GM12878 (cell line): ENCODE measurements at regions of chr12 and their contacts with region 1.

Region 1: DNA sequence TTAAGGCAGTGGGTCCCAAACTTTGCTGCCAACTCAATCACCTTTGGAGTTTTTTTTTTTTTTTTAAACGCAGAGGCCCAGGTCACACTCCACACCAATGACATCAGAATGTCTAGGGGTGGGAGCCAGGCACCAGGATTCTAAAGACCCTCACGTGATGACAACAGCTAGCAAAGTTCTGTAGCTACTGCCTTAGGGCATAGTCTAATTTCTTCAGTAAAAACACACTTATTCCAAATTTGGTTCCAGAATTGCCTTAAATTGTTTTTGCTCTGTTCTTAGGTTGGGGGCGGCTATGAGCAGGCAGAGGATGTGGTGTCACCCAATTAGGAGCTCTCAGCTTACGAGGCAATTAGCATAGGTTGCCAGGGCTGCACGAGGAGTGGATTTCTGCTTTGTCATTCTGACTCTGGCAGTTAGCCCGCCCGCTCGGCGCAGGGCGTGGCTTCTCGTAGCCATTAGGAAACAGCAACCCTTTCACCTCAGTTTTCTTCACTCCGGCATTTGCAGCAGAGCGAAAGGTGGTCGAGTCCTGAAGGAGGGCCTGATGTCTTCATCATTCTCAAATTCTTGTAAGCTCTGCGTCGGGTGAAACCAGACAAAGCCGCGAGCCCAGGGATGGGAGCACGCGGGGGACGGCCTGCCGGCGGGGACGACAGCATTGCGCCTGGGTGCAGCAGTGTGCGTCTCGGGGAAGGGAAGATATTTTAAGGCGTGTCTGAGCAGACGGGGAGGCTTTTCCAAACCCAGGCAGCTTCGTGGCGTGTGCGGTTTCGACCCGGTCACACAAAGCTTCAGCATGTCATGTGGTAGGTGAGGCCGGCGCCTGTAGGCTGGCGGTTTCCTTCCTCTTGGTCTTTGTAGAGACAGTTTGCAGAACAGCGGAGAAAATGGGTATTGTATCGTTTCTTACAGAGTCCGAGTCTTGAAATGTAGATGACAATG is 16.7 kb upstream of the EID3 start:
- DNase-seq: peak; percentile 94
- ATAC-seq: peak; percentile 93
- H3K4me3 ChIP-seq: peak overlapping the region; percentile 89
- H3K27ac ChIP-seq: peak overlapping the region; percentile 89
- H3K4me1 ChIP-seq: peaks cover 8% of the 10 kb centered on the region
- H3K27me3 ChIP-seq: no peaks in the 10 kb centered on the region
- CTCF ChIP-seq: no peak
- EP300 ChIP-seq: 0 out of 4 replicates have a peak, but pooled peaks of 1 of the 2 experiments have one; percentile 22
- POLR2A ChIP-seq: peak; percentile 91
- RAD21 ChIP-seq: no peak

Region 2: DNA sequence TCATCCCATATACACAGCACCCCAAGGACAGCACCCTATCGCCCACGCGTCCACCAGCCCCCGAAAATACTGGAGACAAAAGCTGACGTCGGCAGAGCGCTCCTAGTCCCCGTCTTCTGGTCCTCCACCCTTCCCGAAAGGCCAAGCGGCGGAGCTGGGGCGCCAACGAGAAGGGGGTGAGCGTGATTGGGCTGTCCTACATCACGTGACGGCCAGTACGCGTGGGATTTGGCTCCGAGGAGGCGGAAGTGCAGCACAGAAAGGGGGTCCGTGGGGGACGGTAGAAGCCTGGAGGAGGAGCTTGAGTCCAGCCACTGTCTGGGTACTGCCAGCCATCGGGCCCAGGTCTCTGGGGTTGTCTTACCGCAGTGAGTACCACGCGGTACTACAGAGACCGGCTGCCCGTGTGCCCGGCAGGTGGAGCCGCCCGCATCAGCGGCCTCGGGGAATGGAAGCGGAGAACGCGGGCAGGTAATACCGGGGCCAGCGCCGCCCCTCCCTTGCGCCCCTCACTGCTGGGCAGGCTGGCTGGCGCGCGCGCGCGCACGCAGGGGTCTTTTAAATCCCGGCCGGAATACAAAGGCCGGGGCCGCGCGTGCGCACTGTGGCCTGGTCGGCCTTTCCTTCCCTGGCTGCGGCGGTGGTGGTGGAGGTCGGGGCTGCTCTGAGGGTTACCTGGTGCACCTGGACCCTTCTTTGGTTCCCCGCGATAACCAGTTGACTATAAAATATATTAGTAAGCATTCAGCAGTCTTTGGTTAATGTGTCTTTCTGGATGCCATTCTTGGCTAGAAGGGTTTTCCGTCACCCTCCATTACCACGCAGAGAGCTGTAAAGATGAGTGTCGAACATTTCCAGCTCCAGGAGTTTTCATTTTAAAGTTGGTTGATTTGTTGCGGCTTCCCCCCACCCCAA is 321.0 kb before region 1 on chr12 and contains the start of gene TDG:
- CTCF ChIA-PET with region 1: no interaction called
- POLR2A ChIA-PET with region 1: interaction called, 6 read pairs
- RAD21 ChIA-PET with region 1: no interaction called
- SMC1A ChIA-PET with region 1: no interaction called
- in situ Hi-C with region 1: no loop called
- intact Hi-C with region 1: loop called (anchors 10 kb)
- DNase-seq: peak; percentile 97
- ATAC-seq: peak; percentile 96
- H3K4me3 ChIP-seq: peak within 1 kb of the TSS; percentile 92
- H3K27ac ChIP-seq: peak within 1 kb of the TSS; percentile 94
- H3K4me1 ChIP-seq: peaks cover 10% of the 10 kb centered on the region
- H3K27me3 ChIP-seq: no peaks in the 10 kb centered on the region
- CTCF ChIP-seq: peak in 1 of 3 experiments; percentile 23; a peak in 1 of 6 replicates
- EP300 ChIP-seq: no peak
- POLR2A ChIP-seq: peak; percentile 96
- RAD21 ChIP-seq: no peak
- polyA plus RNA-seq, gene TDG: 29.7 to 33.7 TPM

Region 3: DNA sequence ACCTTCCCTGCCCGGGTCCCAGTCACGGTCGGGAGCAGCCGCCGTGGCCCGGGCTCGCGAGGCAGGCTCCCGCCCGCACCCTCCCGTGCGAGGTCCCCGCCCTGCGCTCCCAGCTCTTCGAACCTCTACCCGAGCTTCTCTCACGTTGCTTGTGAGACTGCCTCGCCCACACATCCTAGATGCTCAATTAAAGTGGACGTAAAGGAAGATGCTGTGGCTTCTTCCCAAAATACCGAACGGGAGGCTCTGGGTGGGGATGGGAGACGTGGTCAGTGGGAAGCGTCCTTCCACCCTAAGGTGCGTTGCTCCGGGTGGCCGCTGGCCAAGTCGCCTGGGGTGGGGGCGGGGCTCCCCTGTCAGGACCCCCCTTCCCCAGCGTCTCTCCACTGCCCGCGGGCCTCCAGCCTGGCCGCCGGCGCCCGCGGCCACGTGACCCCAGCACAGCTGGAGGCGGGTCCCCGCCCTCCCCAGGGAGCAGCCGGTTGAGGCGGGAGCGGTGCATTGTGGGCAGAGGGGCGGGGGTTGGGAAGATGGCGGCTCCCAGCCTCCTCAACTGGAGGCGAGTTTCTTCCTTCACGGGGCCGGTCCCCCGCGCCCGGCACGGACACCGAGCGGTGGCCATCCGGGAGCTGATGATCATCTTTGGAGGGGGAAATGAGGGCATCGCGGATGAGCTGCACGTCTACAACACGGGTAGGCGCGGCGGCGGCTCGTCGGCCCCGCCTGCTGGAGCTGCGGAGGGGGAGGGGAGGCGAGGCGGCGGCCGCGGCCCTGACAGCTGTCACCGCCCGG is 222.6 kb before region 1 on chr12 and contains the start of gene HCFC2:
- CTCF ChIA-PET with region 1: no interaction called
- POLR2A ChIA-PET with region 1: interaction called, 3 read pairs
- RAD21 ChIA-PET with region 1: interaction called, 8 read pairs
- SMC1A ChIA-PET with region 1: no interaction called
- in situ Hi-C with region 1: no loop called
- intact Hi-C with region 1: loop called (anchors 10 kb)
- DNase-seq: peak; percentile 61
- ATAC-seq: peak; percentile 94
- H3K4me3 ChIP-seq: peak within 1 kb of the TSS; percentile 88
- H3K27ac ChIP-seq: peak within 1 kb of the TSS; percentile 81
- H3K4me1 ChIP-seq: no peaks in the 10 kb centered on the region
- H3K27me3 ChIP-seq: no peaks in the 10 kb centered on the region; a peak in 1 of 4 replicates
- CTCF ChIP-seq: no peak
- EP300 ChIP-seq: peak in 1 of 2 experiments; percentile 17; a peak in 1 of 4 replicates
- POLR2A ChIP-seq: peak; percentile 81
- RAD21 ChIP-seq: no peak
- polyA plus RNA-seq, gene HCFC2: 1.8 to 3.8 TPM

Region 4: GRCh38 chr12:104132351-104132956 is 154.4 kb before region 1 on chr12:
- CTCF ChIA-PET with region 1: no interaction called
- POLR2A ChIA-PET with region 1: interaction called, 5 read pairs
- RAD21 ChIA-PET with region 1: no interaction called
- SMC1A ChIA-PET with region 1: interaction called, 4 read pairs
- in situ Hi-C with region 1: no loop called
- intact Hi-C with region 1: loop called (anchors 5 kb)
- DNase-seq: no peak
- ATAC-seq: no peak; the same call in 2 of the 3 replicates
- H3K4me3 ChIP-seq: no peak overlapping the region
- H3K27ac ChIP-seq: no peak overlapping the region
- H3K4me1 ChIP-seq: peaks cover 6% of the 10 kb centered on the region; the same call in 1 of the 2 replicates
- H3K27me3 ChIP-seq: no peaks in the 10 kb centered on the region
- CTCF ChIP-seq: no peak
- EP300 ChIP-seq: no peak
- POLR2A ChIP-seq: no peak
- RAD21 ChIP-seq: no peak

Region 5: DNA sequence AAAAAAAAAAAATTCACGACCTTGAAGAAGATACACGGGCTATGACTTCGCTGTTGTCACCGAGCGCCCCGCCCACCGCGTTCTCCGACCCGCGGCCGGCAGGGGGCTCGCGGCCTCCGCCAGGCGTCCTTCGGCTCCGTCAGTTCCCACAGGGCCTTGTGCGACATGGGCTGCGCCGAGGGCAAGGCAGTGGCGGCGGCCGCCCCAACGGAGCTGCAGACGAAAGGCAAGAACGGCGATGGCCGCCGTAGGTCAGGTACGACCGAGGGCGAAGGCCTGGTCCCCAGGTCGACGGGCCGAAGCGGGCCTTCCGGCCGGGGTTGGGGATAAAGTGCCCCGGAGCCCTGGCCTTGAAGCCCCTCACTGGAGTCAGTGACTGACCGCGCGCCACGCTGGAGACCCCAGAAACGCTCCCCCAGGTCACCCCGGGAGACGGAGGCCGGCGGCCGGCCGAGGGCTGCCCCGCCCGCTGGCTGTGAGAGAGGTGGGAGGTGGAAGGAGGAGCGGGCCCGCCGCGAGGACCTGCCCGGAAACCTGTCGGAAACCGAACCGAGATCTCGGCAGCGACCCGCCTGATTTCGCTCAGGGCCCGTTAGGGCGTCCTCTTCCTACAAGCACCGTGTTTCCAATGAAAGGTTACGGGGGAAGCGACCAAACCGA is 71.0 kb before region 1 on chr12 and contains the start of gene TXNRD1:
- CTCF ChIA-PET with region 1: interaction called, 11 read pairs
- POLR2A ChIA-PET with region 1: no interaction called
- RAD21 ChIA-PET with region 1: interaction called, 9 read pairs
- SMC1A ChIA-PET with region 1: no interaction called
- in situ Hi-C with region 1: no loop called
- intact Hi-C with region 1: no loop called
- DNase-seq: peak; percentile 19
- ATAC-seq: peak; percentile 99
- H3K4me3 ChIP-seq: peak within 1 kb of the TSS; percentile 53; the same call in 1 of the 2 replicates
- H3K27ac ChIP-seq: no peak within 1 kb of the TSS
- H3K4me1 ChIP-seq: no peaks in the 10 kb centered on the region
- H3K27me3 ChIP-seq: no peaks in the 10 kb centered on the region
- CTCF ChIP-seq: peak; percentile 81 to 94 (median 83)
- EP300 ChIP-seq: no peak
- POLR2A ChIP-seq: peak; percentile 81
- RAD21 ChIP-seq: peak; percentile 85
- polyA plus RNA-seq, gene TXNRD1: 52.6 to 56.7 TPM

Region 6: GRCh38 chr12:104276273-104277131 is 10.3 kb before region 1 on chr12:
- CTCF ChIA-PET with region 1: interaction called, 24 read pairs
- POLR2A ChIA-PET with region 1: interaction called, 56 read pairs
- RAD21 ChIA-PET with region 1: interaction called, 41 read pairs
- SMC1A ChIA-PET with region 1: interaction called, 58 read pairs
- in situ Hi-C with region 1: no loop called
- intact Hi-C with region 1: no loop called
- DNase-seq: no peak
- ATAC-seq: peak; percentile 94
- H3K4me3 ChIP-seq: peak overlapping the region; percentile 40
- H3K27ac ChIP-seq: peak overlapping the region; percentile 53
- H3K4me1 ChIP-seq: peaks cover 11% of the 10 kb centered on the region
- H3K27me3 ChIP-seq: no peaks in the 10 kb centered on the region
- CTCF ChIP-seq: no peak
- EP300 ChIP-seq: no peak
- POLR2A ChIP-seq: no peak
- RAD21 ChIP-seq: no peak

Region 7: DNA sequence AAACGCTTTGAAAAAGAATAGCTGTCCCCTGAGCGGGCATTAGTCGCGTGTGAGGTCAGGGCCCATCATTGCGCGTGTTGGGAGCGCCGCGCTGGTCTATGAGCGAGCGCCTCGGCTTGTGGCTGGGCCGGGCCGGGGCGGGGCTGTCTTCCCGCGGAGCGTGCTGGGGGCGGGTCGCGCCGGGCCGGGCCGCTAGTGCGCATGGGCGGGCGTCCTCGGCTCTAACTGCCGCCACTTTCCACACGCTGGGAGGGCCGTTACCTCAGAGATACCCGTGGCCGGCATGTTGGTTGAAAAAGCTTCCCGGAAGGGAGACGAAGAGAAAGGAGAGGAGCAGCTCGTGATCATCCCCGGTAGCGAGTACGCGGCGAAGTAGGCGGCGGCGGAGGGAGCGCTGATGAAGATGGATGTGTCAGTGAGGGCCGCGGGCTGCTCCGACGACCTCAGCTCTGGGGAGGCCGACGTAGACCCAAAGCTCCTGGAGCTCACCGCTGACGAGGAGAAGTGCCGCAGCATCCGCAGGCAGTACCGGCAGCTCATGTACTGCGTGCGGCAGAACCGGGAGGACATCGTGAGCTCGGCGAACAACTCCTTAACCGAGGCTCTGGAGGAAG is 16.8 kb after region 1 on chr12 and contains the start of gene EID3:
- CTCF ChIA-PET with region 1: interaction called, 22 read pairs
- POLR2A ChIA-PET with region 1: interaction called, 42 read pairs
- RAD21 ChIA-PET with region 1: interaction called, 33 read pairs
- SMC1A ChIA-PET with region 1: interaction called, 33 read pairs
- in situ Hi-C with region 1: no loop called
- intact Hi-C with region 1: no loop called
- DNase-seq: no peak
- ATAC-seq: peak; percentile 99
- H3K4me3 ChIP-seq: peak within 1 kb of the TSS; percentile 69
- H3K27ac ChIP-seq: peak within 1 kb of the TSS; percentile 66
- H3K4me1 ChIP-seq: peaks cover 9% of the 10 kb centered on the region
- H3K27me3 ChIP-seq: no peaks in the 10 kb centered on the region
- CTCF ChIP-seq: no peak
- EP300 ChIP-seq: no peak
- POLR2A ChIP-seq: peak; percentile 69
- RAD21 ChIP-seq: no peak
- polyA plus RNA-seq, gene EID3: 1.6 to 2.2 TPM